Common myeloid progenitor, CD34-positive (primary cell): ENCODE measurements at regions of chr7 and their contacts with region 1.

Region 1: DNA sequence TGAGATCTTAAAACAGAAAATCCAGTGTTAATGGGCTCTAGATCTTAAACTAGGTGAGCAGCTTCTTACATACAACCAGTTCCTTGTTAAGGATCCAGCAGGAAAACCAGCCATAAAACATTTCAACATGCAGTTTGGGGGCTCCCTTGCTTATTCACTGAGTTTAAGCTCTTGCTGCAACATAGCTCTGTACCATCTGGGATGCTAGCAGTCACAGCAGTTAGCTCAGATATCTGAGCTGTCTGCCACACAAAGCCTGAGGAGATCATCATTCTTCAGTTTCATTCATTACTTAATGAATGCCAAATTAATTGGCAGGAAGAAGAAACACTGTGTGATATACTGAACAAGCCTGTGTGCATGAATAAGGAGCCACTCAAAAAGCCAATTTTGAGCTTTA is 62.8 kb downstream of the PODXL start:
- DNase-seq: no peak
- H3K4me3 ChIP-seq: no peak overlapping the region
- H3K27ac ChIP-seq: no peak overlapping the region
- H3K4me1 ChIP-seq: no peaks in the 10 kb centered on the region
- H3K27me3 ChIP-seq: no peaks in the 10 kb centered on the region

Region 2: DNA sequence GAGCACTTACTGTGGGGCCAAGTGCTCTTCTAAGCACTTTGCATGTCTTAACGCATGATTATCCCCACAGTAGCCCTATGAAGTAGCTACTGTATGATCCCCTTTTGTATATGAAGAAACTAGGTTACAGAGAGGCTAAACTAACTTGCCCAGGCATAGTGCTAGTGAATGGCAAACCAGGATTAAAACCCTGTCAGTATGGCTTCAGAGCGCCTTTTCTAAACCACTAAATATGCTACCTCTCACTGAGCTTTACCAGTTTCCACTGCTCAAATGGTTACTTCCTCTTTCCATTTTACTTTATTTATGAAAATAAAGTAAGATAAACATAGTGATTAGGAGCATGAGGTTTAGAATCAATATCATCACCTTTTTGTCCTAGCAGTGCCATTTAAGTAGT is 10.8 kb before region 1 on chr7:
- CTCF ChIA-PET with region 1: interaction called, 17 read pairs
- POLR2A ChIA-PET with region 1: no interaction called
- DNase-seq: peak in 2 of 3 donors; percentile 10 to 13
- H3K4me3 ChIP-seq: no peak overlapping the region
- H3K27ac ChIP-seq: no peak overlapping the region
- H3K4me1 ChIP-seq: no peaks in the 10 kb centered on the region
- H3K27me3 ChIP-seq: no peaks in the 10 kb centered on the region

Region 3: GRCh38 chr7:131513245-131514061 is 19.9 kb after region 1 on chr7:
- CTCF ChIA-PET with region 1: interaction called, 113 read pairs
- POLR2A ChIA-PET with region 1: no interaction called
- DNase-seq: peak; percentile 82 to 90 (median 89)
- H3K4me3 ChIP-seq: peak overlapping the region in 2 of 7 experiments; percentile 20 to 35
- H3K27ac ChIP-seq: no peak overlapping the region
- H3K4me1 ChIP-seq: peaks cover 0 to 13% (median 5%) of the 10 kb centered on the region in 4 experiments
- H3K27me3 ChIP-seq: peaks cover 0 to 2% (median 0%) of the 10 kb centered on the region in 5 experiments